AG04449 (cell line): ENCODE measurements at regions of chr15 and their contacts with region 1.

Region 1: DNA sequence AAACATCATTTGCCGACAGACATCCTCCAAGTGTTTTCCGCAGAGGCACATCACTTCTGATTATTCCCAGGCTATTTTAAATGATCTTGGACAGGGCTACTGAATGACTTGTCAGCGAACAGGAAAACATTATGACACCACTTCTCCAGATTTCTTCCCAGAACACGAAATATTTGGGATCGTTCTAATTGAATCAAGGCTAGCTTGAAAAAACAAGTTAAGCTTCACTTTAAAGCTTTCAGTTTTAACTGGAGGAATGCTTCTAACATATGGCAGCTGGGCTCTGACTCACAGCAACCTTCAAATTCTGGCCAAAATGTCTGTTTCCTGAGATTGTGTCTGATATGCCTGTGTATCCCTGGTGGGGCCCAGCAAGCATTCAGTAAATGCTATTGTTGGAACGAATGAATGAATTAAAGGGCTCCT is 127.0 kb upstream of the ICE2 start:
- DNase-seq: peak; percentile 49
- H3K4me3 ChIP-seq: peak overlapping the region; percentile 27
- CTCF ChIP-seq: no peak

Region 2: GRCh38 chr15:60592371-60593169 is 13.3 kb before region 1 on chr15:
- CTCF ChIA-PET with region 1: interaction called, 30 read pairs
- POLR2A ChIA-PET with region 1: no interaction called
- DNase-seq: no peak
- H3K4me3 ChIP-seq: peak overlapping the region; percentile 64
- CTCF ChIP-seq: peak; percentile 19